ENCODE measurements at regions of chr13 and their contacts with region 1.

Region 1: DNA sequence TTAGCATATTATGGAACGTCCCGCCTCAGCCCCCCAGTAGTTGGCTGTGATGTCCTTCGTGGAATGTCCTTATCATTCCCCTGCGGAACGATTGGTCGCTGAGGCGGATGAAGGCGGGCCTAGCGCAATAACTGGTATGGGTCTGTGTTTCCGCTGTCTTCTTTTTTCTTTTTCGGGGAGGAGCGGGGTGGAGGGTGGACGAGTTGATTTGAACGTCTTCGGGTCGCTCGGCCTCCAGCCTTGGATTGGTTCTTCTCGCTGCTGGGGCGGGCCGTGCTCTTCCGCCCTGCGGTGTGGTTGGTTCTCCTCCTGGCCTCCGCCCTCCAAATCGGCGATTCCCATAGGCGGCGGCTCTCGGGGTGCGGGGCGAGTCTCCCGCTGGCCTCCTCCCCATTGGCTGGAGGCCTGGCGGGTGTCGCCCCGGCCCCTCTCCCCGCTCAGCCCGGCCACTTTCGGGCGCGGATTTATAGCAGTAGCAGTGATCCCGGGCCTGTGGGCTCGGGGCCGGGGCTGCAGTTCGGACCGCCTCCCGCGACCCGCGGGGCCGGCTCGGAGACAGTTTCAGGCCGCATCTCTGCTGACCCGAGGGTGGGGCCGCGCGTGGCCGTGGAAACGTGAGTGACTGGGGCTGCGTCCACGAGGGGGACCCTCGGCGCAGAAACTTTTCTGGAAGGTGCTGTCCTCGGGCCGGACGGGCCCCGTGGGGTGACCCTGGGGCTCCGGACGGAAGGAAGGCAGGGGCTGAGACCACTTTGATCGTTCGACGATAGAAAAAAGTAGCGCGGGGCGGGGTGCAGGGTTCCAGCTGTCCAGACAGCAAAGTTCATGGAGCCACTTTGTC is 2.1 kb downstream of the ING1 start:
- DNase-seq: peak; percentile 97 to 99
- ATAC-seq: peak; percentile 68 to 84 (median 81)
- H3K4me3 ChIP-seq: peak overlapping the region; percentile 79 to 98 (median 92)
- H3K27ac ChIP-seq: peak overlapping the region; percentile 17 to 100 (median 100)
- H3K4me1 ChIP-seq: peaks cover 4 to 33% (median 28%) of the 10 kb centered on the region in 9 donors
- H3K27me3 ChIP-seq: no peaks in the 10 kb centered on the region
- CTCF ChIP-seq: peak in 6 of 9 donors; percentile 9 to 55 (median 34)

Region 2: DNA sequence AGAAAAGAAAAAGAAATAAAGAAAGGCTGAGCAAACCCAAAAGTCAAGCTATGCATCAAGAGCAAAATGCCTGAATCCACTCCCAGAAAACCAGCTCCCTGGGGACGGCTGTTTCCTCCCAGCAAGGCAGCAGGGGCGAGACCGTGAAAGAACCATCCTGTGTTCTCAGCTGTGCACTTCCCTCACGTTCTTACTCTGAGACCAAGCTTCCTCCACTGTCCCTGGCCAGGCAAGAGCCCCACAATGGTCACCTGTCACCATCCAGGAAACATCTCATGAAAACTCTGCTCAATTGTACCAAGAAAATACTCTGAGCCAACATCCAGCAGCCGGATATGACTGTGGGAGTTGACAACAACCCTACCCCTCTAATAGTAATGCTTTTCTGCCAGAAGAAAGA is 177.0 kb before region 1 on chr13:
- intact Hi-C with region 1: no loop called
- DNase-seq: peak; percentile 63 to 87
- ATAC-seq: peak; percentile 61 to 83 (median 74)
- H3K4me3 ChIP-seq: no peak overlapping the region
- H3K27ac ChIP-seq: peak overlapping the region in 8 of 10 donors; percentile 7 to 83 (median 37)
- H3K4me1 ChIP-seq: peaks cover 5 to 80% (median 42%) of the 10 kb centered on the region in 9 donors
- H3K27me3 ChIP-seq: no peaks in the 10 kb centered on the region
- CTCF ChIP-seq: no peak

Region 3: GRCh38 chr13:110615322-110616102 is 100.1 kb before region 1 on chr13 and contains the start of gene NAXD:
- intact Hi-C with region 1: loop called in 3 of 10 experiments (anchors 5 to 10 kb)
- DNase-seq: peak; percentile 95 to 96
- ATAC-seq: peak; percentile 93 to 98 (median 97)
- H3K4me3 ChIP-seq: peak within 1 kb of the TSS; percentile 69 to 98 (median 82)
- H3K27ac ChIP-seq: peak within 1 kb of the TSS; percentile 78 to 98 (median 92)
- H3K4me1 ChIP-seq: peaks cover 0 to 48% (median 37%) of the 10 kb centered on the region in 9 donors
- H3K27me3 ChIP-seq: peaks cover 0 to 9% (median 0%) of the 10 kb centered on the region in 7 donors
- CTCF ChIP-seq: peak in 1 of 9 donors; percentile 7
- total RNA-seq, gene NAXD: 24.7 to 33.9 (median 27.8) TPM

Region 4: DNA sequence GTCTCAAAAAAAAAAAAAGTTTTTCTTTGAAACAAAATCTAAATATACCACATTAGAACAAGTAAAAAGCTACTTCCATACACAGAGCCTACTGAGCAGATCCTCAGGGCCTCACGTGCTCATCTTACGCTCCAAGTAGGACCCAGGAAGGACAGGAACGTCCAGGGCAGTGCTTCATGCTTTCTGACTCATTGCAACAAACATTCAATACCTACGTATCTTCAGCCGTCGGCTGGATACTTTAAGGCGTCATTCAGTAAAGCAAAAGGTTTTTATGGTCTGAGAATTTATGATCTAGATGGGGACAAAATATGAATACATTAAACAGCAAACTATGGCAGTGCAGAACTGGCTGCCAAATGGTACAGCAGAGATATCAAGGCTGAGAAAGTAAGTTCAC is 30.3 kb before region 1 on chr13:
- intact Hi-C with region 1: no loop called
- DNase-seq: no peak
- ATAC-seq: no peak
- H3K4me3 ChIP-seq: no peak overlapping the region
- H3K27ac ChIP-seq: no peak overlapping the region
- H3K4me1 ChIP-seq: peaks cover 0 to 4% (median 0%) of the 10 kb centered on the region in 9 donors
- H3K27me3 ChIP-seq: no peaks in the 10 kb centered on the region
- CTCF ChIP-seq: no peak

Region 5: DNA sequence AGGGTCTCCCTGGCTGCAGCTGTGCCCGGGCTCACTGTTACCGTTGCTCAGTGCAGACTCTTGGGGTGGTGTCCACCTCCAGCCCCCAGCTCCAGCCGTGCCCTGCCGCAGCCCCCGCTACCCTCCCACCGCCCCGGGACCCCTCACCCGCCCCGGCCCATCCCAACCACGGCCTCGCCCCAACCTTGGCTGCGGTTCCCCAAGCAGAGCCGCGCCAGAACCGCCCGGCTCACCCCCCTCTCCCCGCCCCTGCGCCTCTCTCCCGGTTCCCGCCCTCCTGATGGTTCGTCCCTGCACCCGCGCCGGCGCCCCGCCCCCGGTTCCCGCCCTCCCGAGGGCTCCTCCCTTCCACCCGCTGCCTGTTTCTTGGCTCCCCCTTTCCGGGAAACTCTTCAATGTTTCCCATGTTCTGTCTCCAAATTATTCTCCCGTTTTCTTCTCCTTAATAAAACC is 158.9 kb after region 1 on chr13:
- intact Hi-C with region 1: loop called in 1 of 10 experiments (anchors 2 kb)
- DNase-seq: peak; percentile 89 to 92
- ATAC-seq: peak; percentile 73 to 88 (median 76)
- H3K4me3 ChIP-seq: peak overlapping the region in 9 of 10 donors; percentile 18 to 53 (median 47)
- H3K27ac ChIP-seq: peak overlapping the region in 3 of 10 donors; percentile 8 to 56 (median 44)
- H3K4me1 ChIP-seq: peaks cover 7 to 40% (median 25%) of the 10 kb centered on the region in 9 donors
- H3K27me3 ChIP-seq: peaks cover 0 to 6% (median 0%) of the 10 kb centered on the region in 7 donors
- CTCF ChIP-seq: no peak

Measured in heart right ventricle (tissue), 16 donors.